ENCODE measurements at regions of chr21 and their contacts with region 1.

Region 1: DNA sequence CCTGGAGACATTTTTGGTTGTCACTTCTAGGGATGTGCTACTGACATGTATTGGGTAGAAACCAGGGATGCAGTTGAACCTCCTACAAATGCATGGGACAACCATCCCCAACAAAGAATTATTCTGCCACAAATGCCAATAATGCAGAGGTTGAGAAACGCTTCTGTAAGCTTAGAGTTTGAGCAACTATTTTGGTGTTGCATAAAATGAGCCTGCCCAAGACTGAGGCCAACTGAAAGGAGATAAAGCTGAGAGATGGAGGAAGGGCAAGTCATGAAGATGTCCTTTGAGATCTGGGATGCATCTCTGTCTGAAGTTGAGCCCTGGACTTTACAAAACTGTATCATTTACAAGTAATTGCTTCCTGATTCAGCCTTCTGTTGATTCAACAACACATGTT is 106.9 kb downstream of the KCNJ15 start:
- DNase-seq: no peak
- H3K4me3 ChIP-seq: no peak overlapping the region
- H3K27ac ChIP-seq: no peak overlapping the region
- H3K4me1 ChIP-seq: no peaks in the 10 kb centered on the region
- H3K27me3 ChIP-seq: no peaks in the 10 kb centered on the region
- CTCF ChIP-seq: no peak
- EP300 ChIP-seq: no peak
- POLR2A ChIP-seq: no peak

Region 2: GRCh38 chr21:37484535-37485474 is 878.9 kb before region 1 on chr21:
- intact Hi-C with region 1: loop called in 1 of 4 experiments (anchors 10 kb)
- DNase-seq: no peak
- H3K4me3 ChIP-seq: no peak overlapping the region
- H3K27ac ChIP-seq: no peak overlapping the region
- H3K4me1 ChIP-seq: no peaks in the 10 kb centered on the region
- H3K27me3 ChIP-seq: no peaks in the 10 kb centered on the region
- CTCF ChIP-seq: no peak
- EP300 ChIP-seq: no peak
- POLR2A ChIP-seq: no peak

Region 3: GRCh38 chr21:38219049-38219628 is 144.6 kb before region 1 on chr21:
- intact Hi-C with region 1: loop called in 2 of 4 experiments (anchors 5 to 10 kb)
- DNase-seq: peak; percentile 29 to 69 (median 47)
- H3K4me3 ChIP-seq: no peak overlapping the region
- H3K27ac ChIP-seq: no peak overlapping the region
- H3K4me1 ChIP-seq: no peaks in the 10 kb centered on the region
- H3K27me3 ChIP-seq: no peaks in the 10 kb centered on the region
- CTCF ChIP-seq: peak; percentile 41 to 74 (median 71)
- EP300 ChIP-seq: no peak
- POLR2A ChIP-seq: no peak

Measured in ovary (tissue), 10 donors.